Testis (tissue), 5 donors: ENCODE measurements at regions of chr1 and their contacts with region 1.

Region 1: GRCh38 chr1:167721617-167722151 is at the start of gene MPZL1:
- DNase-seq: peak; percentile 98
- H3K4me3 ChIP-seq: peak within 1 kb of the TSS; percentile 95 to 97
- H3K27ac ChIP-seq: peak within 1 kb of the TSS; percentile 92
- H3K4me1 ChIP-seq: peaks cover 24% of the 10 kb centered on the region
- H3K27me3 ChIP-seq: no peaks in the 10 kb centered on the region
- CTCF ChIP-seq: peak in 1 of 3 experiments; percentile 2
- POLR2A ChIP-seq: peak; percentile 63
- total RNA-seq, gene MPZL1: 154 to 160 TPM

Region 2: GRCh38 chr1:167803358-167804207 is 81.9 kb after region 1 on chr1:
- intact Hi-C with region 1: loop called (anchors 5 kb)
- DNase-seq: peak; percentile 96
- H3K4me3 ChIP-seq: no peak overlapping the region
- H3K27ac ChIP-seq: no peak overlapping the region
- H3K4me1 ChIP-seq: peaks cover 9% of the 10 kb centered on the region
- H3K27me3 ChIP-seq: no peaks in the 10 kb centered on the region
- CTCF ChIP-seq: peak; percentile 93 to 95 (median 95)
- POLR2A ChIP-seq: no peak

Region 3: GRCh38 chr1:168004531-168004930 is 282.8 kb after region 1 on chr1:
- intact Hi-C with region 1: no loop called
- DNase-seq: peak; percentile 22
- H3K4me3 ChIP-seq: no peak overlapping the region
- H3K27ac ChIP-seq: no peak overlapping the region
- H3K4me1 ChIP-seq: no peaks in the 10 kb centered on the region
- H3K27me3 ChIP-seq: no peaks in the 10 kb centered on the region
- CTCF ChIP-seq: no peak
- POLR2A ChIP-seq: no peak